CD4-positive, alpha-beta T cell (primary cell): ENCODE measurements at regions of chr6 and their contacts with region 1.

Region 1: DNA sequence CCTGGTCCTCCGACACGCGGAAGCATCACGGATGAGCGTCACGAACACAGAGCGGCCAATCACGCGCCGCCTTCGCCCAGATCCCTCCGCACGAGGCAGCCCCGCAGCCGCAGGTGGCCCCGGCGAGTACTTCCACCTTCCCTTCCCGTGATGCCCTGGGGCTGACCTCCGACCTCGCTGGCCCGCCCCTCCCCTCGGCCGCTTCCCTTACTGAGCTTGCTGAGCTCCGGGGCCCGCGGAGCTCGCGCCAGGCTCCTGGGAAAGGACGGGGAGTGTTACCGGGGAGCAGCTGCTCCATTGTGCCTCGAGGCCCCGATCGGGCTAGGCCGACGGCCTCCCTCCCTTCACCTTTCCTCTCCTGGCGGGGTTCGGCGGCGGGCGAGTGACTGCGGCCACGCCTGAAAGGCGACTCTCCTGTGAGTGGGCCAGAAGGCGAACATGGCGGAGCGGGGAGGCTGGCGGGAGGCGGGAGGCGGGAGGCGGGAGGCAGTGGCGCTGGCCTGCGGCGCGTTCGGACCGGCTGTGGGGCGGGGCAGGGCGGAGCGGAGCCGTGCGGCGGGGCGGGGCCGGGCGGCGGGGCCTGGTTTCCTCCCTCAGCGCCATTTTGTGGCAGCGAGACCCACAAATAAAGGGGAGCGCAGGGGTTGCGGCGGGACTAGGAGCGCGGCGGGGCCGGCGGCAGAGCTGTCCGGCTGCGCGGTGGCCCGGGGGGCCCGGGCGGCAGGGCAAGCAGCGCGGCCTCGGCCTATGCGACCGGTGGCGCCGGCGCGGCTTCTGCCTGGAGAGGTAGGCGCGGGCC is at the start of gene WTAP:
- DNase-seq: peak; percentile 94 to 99 (median 96)
- ATAC-seq: peak; percentile 86
- H3K4me3 ChIP-seq: peak within 1 kb of the TSS; percentile 82
- H3K4me3 Mint-ChIP-seq: peak within 1 kb of the TSS; percentile 99
- H3K27ac ChIP-seq: peak within 1 kb of the TSS; percentile 95 to 98
- H3K27ac Mint-ChIP-seq: peak within 1 kb of the TSS; percentile 100
- H3K4me1 ChIP-seq: peaks cover 25% of the 10 kb centered on the region
- H3K4me1 Mint-ChIP-seq: peaks cover 80% of the 10 kb centered on the region
- H3K27me3 ChIP-seq: no peaks in the 10 kb centered on the region
- H3K27me3 Mint-ChIP-seq: peaks cover 9% of the 10 kb centered on the region
- CTCF ChIP-seq: no peak
- total RNA-seq, gene WTAP: 211 to 227 TPM

Region 2: GRCh38 chr6:159739341-159739740 is 12.2 kb after region 1 on chr6:
- CTCF ChIA-PET with region 1: no interaction called
- POLR2A ChIA-PET with region 1: interaction called, 20 read pairs
- intact Hi-C with region 1: loop called in 1 of 2 experiments (anchors 2 kb)
- DNase-seq: no peak
- ATAC-seq: no peak
- H3K4me3 ChIP-seq: no peak overlapping the region
- H3K4me3 Mint-ChIP-seq: no peak overlapping the region
- H3K27ac ChIP-seq: no peak overlapping the region
- H3K27ac Mint-ChIP-seq: no peak overlapping the region
- H3K4me1 ChIP-seq: peaks cover 12% of the 10 kb centered on the region
- H3K4me1 Mint-ChIP-seq: peaks cover 64% of the 10 kb centered on the region
- H3K27me3 ChIP-seq: no peaks in the 10 kb centered on the region
- H3K27me3 Mint-ChIP-seq: no peaks in the 10 kb centered on the region
- CTCF ChIP-seq: no peak

Region 3: GRCh38 chr6:159745081-159745480 is 18.0 kb after region 1 on chr6:
- CTCF ChIA-PET with region 1: no interaction called
- POLR2A ChIA-PET with region 1: interaction called, 5 read pairs
- intact Hi-C with region 1: loop called in 1 of 2 experiments (anchors 2 kb)
- DNase-seq: no peak
- ATAC-seq: no peak
- H3K4me3 ChIP-seq: no peak overlapping the region
- H3K4me3 Mint-ChIP-seq: no peak overlapping the region
- H3K27ac ChIP-seq: no peak overlapping the region
- H3K27ac Mint-ChIP-seq: peak overlapping the region; percentile 61
- H3K4me1 ChIP-seq: no peaks in the 10 kb centered on the region
- H3K4me1 Mint-ChIP-seq: peaks cover 43% of the 10 kb centered on the region
- H3K27me3 ChIP-seq: no peaks in the 10 kb centered on the region
- H3K27me3 Mint-ChIP-seq: no peaks in the 10 kb centered on the region
- CTCF ChIP-seq: no peak

Region 4: GRCh38 chr6:159761873-159762680 is 35.0 kb after region 1 on chr6 and contains the start of gene ACAT2:
- CTCF ChIA-PET with region 1: no interaction called
- POLR2A ChIA-PET with region 1: interaction called, 148 read pairs
- intact Hi-C with region 1: loop called (anchors 1 to 2 kb)
- DNase-seq: peak; percentile 80 to 97 (median 90)
- ATAC-seq: peak; percentile 89
- H3K4me3 ChIP-seq: peak within 1 kb of the TSS; percentile 100
- H3K4me3 Mint-ChIP-seq: peak within 1 kb of the TSS; percentile 98
- H3K27ac ChIP-seq: peak within 1 kb of the TSS; percentile 94 to 99
- H3K27ac Mint-ChIP-seq: peak within 1 kb of the TSS; percentile 97
- H3K4me1 ChIP-seq: peaks cover 21% of the 10 kb centered on the region
- H3K4me1 Mint-ChIP-seq: peaks cover 34% of the 10 kb centered on the region
- H3K27me3 ChIP-seq: no peaks in the 10 kb centered on the region
- H3K27me3 Mint-ChIP-seq: no peaks in the 10 kb centered on the region
- CTCF ChIP-seq: no peak
- total RNA-seq, gene ACAT2: 21.4 to 25.8 TPM

Region 5: GRCh38 chr6:159819932-159820640 is 93.0 kb after region 1 on chr6:
- CTCF ChIA-PET with region 1: no interaction called
- POLR2A ChIA-PET with region 1: interaction called, 10 read pairs
- intact Hi-C with region 1: no loop called
- DNase-seq: peak in 12 of 14 experiments; percentile 5 to 64 (median 36)
- ATAC-seq: peak; percentile 85
- H3K4me3 ChIP-seq: peak overlapping the region; percentile 47
- H3K4me3 Mint-ChIP-seq: peak overlapping the region; percentile 83
- H3K27ac ChIP-seq: peak overlapping the region; percentile 33 to 53
- H3K27ac Mint-ChIP-seq: peak overlapping the region; percentile 81
- H3K4me1 ChIP-seq: peaks cover 24% of the 10 kb centered on the region
- H3K4me1 Mint-ChIP-seq: peaks cover 30% of the 10 kb centered on the region
- H3K27me3 ChIP-seq: no peaks in the 10 kb centered on the region
- H3K27me3 Mint-ChIP-seq: no peaks in the 10 kb centered on the region
- CTCF ChIP-seq: no peak

Region 6: DNA sequence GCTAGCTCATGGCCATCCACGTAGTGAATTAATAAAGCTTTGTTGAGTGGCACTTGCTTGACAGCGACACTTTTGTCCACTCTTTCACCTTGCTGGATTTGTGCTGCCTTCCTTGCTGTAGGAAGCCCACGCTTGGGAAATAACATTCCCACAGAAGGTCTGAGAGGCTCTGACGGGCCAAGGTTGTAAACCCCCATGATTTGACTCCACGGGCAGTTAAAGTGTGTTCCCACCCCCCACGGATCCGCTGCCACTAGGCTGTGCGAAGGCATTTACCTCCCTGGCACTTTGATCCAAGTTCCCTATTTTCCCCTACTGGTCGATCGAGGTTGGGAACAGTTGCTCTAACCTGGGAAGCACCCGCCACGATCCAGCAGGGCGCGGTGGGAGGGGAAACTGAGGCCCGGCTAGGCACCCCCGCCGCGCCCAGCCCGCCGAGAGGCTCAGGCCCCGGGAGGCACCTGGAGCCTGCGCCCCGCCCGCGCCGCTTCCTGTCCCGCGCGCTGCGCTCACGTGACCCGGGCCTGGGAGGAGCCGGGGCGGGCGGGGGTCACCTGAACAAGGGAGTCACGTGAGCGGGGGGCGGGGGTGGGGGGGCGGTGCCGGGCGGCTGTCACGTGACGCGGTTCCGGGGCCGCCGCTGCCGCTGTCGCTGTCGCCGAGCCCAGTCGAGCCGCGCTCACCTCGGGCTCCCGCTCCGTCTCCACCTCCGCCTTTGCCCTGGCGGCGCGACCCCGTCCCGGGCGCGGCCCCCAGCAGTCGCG is 241.5 kb after region 1 on chr6 and contains the start of gene IGF2R:
- CTCF ChIA-PET with region 1: no interaction called
- POLR2A ChIA-PET with region 1: interaction called, 20 read pairs
- intact Hi-C with region 1: loop called in 1 of 2 experiments (anchors 2 kb)
- DNase-seq: peak; percentile 86 to 97 (median 94)
- ATAC-seq: peak; percentile 89
- H3K4me3 ChIP-seq: peak within 1 kb of the TSS; percentile 76
- H3K4me3 Mint-ChIP-seq: peak within 1 kb of the TSS; percentile 98
- H3K27ac ChIP-seq: peak within 1 kb of the TSS; percentile 31 to 42
- H3K27ac Mint-ChIP-seq: peak within 1 kb of the TSS; percentile 91
- H3K4me1 ChIP-seq: peaks cover 41% of the 10 kb centered on the region
- H3K4me1 Mint-ChIP-seq: peaks cover 45% of the 10 kb centered on the region
- H3K27me3 ChIP-seq: no peaks in the 10 kb centered on the region
- H3K27me3 Mint-ChIP-seq: no peaks in the 10 kb centered on the region
- CTCF ChIP-seq: no peak
- total RNA-seq, gene IGF2R: 43.8 to 46.7 TPM

Region 7: GRCh38 chr6:160455541-160456213 is 728.6 kb after region 1 on chr6:
- CTCF ChIA-PET with region 1: no interaction called
- POLR2A ChIA-PET with region 1: no interaction called
- intact Hi-C with region 1: loop called in 1 of 2 experiments (anchors 10 kb)
- DNase-seq: peak; percentile 49 to 80 (median 62)
- ATAC-seq: peak; percentile 98
- H3K4me3 ChIP-seq: no peak overlapping the region
- H3K4me3 Mint-ChIP-seq: no peak overlapping the region
- H3K27ac ChIP-seq: no peak overlapping the region
- H3K27ac Mint-ChIP-seq: no peak overlapping the region
- H3K4me1 ChIP-seq: peaks cover 47% of the 10 kb centered on the region
- H3K4me1 Mint-ChIP-seq: peaks cover 35% of the 10 kb centered on the region
- H3K27me3 ChIP-seq: no peaks in the 10 kb centered on the region
- H3K27me3 Mint-ChIP-seq: peaks cover 29% of the 10 kb centered on the region
- CTCF ChIP-seq: peak; percentile 98